Left ventricle myocardium inferior (tissue), 1 donor: ENCODE measurements at regions of chr7 and their contacts with region 1.

Region 1: DNA sequence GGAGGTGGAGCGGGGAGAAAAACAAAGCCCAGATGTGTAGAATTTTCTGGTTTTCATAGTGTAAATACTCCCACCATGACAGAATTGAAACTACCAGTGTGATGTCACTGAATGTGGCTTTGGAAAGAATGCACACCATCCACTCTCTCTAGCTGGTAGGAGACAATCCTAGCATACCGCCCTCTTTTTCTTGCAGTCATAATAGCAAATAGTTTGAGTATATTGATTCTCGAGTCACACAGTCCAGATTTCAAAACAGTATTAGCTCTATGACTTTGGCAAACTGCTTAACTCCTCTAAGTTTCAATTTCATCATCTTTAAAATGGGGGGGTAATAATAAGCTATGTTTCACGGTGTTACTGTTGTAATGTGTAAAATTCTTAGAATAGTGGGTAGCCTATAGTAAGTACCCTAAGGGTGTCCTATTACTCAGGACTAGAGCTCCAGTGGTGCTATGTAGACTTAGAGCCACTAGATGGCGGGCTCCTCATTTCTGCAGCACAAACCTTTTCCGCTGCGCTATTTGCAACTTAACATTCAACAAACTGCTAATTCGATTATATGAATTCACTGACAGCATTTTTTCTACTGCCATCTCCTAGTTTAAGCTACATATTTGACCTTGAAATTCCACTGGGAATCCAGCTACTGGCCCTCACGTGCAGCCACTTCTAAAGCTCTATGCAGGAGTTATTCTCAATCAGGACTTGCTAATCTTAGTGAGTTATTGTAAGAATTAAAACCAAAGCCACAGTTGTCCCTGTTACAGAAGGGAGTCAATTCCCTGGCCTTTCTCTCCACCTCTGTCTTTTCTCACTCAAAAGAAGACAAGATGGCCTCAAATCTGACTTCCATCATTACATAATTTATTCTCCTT is 18.7 kb downstream of the TAS2R40 start:
- DNase-seq: peak; percentile 39
- H3K4me3 ChIP-seq: peak overlapping the region; percentile 19
- H3K27ac ChIP-seq: no peak overlapping the region
- H3K4me1 ChIP-seq: peaks cover 7% of the 10 kb centered on the region
- H3K27me3 ChIP-seq: no peaks in the 10 kb centered on the region
- CTCF ChIP-seq: peak; percentile 96

Region 2: GRCh38 chr7:143015926-143016490 is 224.5 kb before region 1 on chr7:
- intact Hi-C with region 1: no loop called
- DNase-seq: no peak
- H3K4me3 ChIP-seq: no peak overlapping the region
- H3K27ac ChIP-seq: no peak overlapping the region
- H3K4me1 ChIP-seq: no peaks in the 10 kb centered on the region
- H3K27me3 ChIP-seq: no peaks in the 10 kb centered on the region
- CTCF ChIP-seq: no peak

Region 3: DNA sequence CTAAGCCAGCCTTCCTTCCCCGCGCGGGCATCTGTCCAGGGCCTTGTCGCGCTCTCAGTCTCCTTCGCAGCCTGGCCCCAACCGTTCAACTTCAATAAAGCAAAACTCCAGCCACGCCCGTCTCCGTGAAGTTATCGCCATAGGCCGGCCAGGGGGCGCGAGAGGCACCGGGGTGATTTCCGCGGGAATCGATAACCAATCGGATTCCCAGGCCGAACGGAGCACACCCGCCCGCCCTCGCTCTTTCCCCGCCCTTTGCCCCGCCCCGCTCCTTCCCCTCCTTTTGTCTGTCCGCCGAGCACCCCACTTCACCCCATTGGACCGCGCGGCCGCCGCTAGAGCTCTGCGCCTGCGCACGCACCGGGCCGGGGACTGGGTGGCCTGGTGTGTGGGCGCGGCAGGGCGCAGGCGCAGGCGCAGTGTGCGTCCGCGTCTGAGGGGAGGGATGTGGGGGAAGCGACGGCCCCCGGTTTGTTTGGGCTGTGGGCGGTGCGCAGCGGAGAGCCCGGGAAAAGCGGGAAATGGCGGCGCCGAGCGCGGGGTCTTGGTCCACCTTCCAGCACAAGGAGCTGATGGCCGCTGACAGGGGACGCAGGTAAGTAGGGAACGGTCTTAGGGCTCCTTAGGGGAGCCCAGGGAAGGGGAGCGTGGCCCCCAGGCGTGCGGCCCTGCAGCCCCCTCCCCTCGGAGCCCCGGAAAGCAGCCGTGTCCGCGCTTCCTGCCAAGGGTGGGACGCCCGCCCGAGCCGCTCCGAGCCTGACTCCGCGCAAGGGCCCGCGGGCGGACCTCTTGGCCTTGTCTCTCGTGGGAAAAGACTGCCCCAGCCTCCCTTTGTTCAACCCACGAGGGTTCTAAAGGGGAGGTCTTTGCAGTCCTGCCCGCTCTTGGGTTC is 47.7 kb after region 1 on chr7 and contains the start of gene CASP2:
- intact Hi-C with region 1: no loop called
- DNase-seq: peak; percentile 98
- H3K4me3 ChIP-seq: peak within 1 kb of the TSS; percentile 94
- H3K27ac ChIP-seq: peak within 1 kb of the TSS; percentile 95
- H3K4me1 ChIP-seq: peaks cover 72% of the 10 kb centered on the region
- H3K27me3 ChIP-seq: no peaks in the 10 kb centered on the region
- CTCF ChIP-seq: peak; percentile 49
- total RNA-seq, gene CASP2: 10.9 TPM

Region 4: DNA sequence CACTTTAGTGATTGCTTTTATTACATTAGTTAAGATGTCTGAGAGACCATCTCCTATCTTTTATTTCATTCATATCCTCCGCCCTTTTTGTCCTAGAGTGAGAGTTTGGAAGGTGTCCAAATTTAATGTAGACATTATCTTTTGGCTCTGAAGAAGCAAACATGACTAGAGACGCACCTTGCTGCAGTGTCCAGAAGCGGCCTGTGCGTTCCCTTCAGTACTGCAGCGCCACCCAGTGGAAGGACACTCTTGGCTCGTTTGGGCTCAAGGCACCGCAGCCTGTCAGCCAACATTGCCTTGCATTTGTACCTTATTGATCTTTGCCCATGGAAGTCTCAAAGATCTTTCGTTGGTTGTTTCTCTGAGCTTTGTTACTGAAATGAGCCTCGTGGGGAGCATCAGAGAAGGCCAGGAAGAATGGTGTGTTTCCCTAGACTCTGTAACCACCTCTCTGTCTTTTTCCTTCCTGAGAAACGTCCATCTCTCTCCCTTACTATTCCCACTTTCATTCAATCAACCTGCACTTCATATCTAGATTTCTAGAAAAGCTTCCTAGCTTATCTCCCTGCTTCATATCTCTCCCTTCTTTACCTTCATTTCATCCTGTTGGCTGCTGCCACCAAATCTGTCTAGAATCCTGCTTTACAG is 65.0 kb after region 1 on chr7:
- intact Hi-C with region 1: loop called (anchors 2 kb)
- DNase-seq: peak; percentile 79
- H3K4me3 ChIP-seq: no peak overlapping the region
- H3K27ac ChIP-seq: no peak overlapping the region
- H3K4me1 ChIP-seq: peaks cover 29% of the 10 kb centered on the region
- H3K27me3 ChIP-seq: no peaks in the 10 kb centered on the region
- CTCF ChIP-seq: peak; percentile 90

Region 5: GRCh38 chr7:143405173-143406001 is 164.9 kb after region 1 on chr7:
- intact Hi-C with region 1: no loop called
- DNase-seq: peak; percentile 82
- H3K4me3 ChIP-seq: no peak overlapping the region
- H3K27ac ChIP-seq: no peak overlapping the region
- H3K4me1 ChIP-seq: peaks cover 27% of the 10 kb centered on the region
- H3K27me3 ChIP-seq: peaks cover 16% of the 10 kb centered on the region
- CTCF ChIP-seq: no peak

Region 6: GRCh38 chr7:143416565-143417149 is 176.1 kb after region 1 on chr7:
- intact Hi-C with region 1: loop called (anchors 5 kb)
- DNase-seq: no peak
- H3K4me3 ChIP-seq: no peak overlapping the region
- H3K27ac ChIP-seq: no peak overlapping the region
- H3K4me1 ChIP-seq: peaks cover under 1% of the 10 kb centered on the region
- H3K27me3 ChIP-seq: peaks cover 69% of the 10 kb centered on the region
- CTCF ChIP-seq: peak; percentile 85